Activated CD4-positive, alpha-beta memory T cell treated with anti-CD3 and anti-CD28 coated beads, Interleukin-2, amount 10 ng/mL, durations not matched to agents 7 days and 5 days (primary cell): ENCODE measurements at regions of chr2 and their contacts with region 1.

Region 1: GRCh38 chr2:178761759-178762371 is 45.4 kb downstream of the TTN start:
- DNase-seq: peak; percentile 21
- H3K4me3 Mint-ChIP-seq: no peak overlapping the region
- H3K27ac Mint-ChIP-seq: no peak overlapping the region
- H3K4me1 Mint-ChIP-seq: no peaks in the 10 kb centered on the region
- H3K27me3 Mint-ChIP-seq: no peaks in the 10 kb centered on the region

Region 2: DNA sequence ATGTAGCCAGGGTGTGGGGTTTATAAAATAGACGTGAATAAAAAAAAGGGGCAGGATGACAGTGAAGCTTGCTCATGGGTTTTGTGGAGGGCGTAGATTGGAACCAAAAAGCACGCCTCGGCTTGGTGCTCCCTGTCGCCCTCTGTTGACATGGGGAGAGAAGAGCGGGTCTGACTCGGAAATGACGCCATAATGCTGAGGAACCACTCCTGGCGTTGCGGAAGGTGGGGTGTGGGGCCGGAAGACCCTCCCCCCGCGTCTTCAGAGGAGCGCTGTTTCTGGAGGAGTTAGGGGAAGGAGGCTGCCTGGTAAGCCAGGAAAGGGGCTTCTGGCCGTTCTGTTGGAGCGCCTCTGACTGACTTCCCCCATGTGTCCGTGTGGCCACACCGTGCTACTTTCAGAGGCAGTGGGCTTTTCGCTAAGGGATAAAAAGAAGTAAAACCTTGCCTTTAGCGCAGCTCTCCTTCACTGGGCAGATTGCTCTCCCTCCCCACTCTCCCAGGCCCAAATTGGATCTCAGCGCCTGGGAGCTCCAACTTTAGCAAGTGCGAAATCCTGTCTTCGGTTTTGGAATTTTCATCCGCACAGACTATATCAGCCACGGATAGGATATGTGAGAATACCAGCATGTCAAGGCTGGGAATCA is 238.8 kb before region 1 on chr2:
- CTCF ChIA-PET with region 1: no interaction called
- POLR2A ChIA-PET with region 1: no interaction called
- DNase-seq: peak; percentile 88
- H3K4me3 Mint-ChIP-seq: peak overlapping the region; percentile 89
- H3K27ac Mint-ChIP-seq: peak overlapping the region; percentile 80
- H3K4me1 Mint-ChIP-seq: peaks cover 57% of the 10 kb centered on the region
- H3K27me3 Mint-ChIP-seq: no peaks in the 10 kb centered on the region

Region 3: GRCh38 chr2:178718283-178718682 is 43.6 kb before region 1 on chr2:
- CTCF ChIA-PET with region 1: no interaction called
- POLR2A ChIA-PET with region 1: no interaction called
- DNase-seq: no peak
- H3K4me3 Mint-ChIP-seq: no peak overlapping the region
- H3K27ac Mint-ChIP-seq: no peak overlapping the region
- H3K4me1 Mint-ChIP-seq: no peaks in the 10 kb centered on the region
- H3K27me3 Mint-ChIP-seq: no peaks in the 10 kb centered on the region

Region 4: DNA sequence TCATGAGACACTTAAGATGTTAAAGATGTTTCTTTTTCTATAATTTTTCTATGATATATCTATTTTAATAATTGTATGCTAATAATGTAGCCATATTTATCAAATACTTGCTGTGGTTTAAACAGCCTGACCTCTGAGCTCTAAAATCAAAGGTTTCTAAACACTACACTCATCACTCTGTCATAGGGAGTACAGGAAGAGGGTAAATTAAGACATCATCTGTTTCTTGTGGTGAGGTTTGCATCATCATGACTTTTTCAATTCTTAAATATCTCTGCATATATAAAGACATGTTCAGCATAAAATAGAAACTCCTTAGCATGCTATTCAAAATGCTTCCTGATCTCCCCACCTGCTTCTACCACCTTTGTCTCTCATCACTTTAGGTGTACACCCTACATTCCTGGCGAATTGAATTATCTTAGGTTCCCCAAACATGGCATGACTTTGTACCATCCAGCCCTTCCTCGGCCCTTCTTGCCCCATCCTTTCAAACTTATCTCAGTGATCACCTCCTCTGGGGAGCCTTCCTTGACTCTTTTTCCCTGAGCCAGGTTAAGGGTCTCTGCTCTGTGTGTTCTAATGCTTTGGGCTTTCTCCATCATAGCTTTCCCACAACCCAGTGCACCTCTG is 150.7 kb after region 1 on chr2:
- CTCF ChIA-PET with region 1: interaction called, 15 read pairs
- POLR2A ChIA-PET with region 1: no interaction called
- DNase-seq: no peak
- H3K4me3 Mint-ChIP-seq: no peak overlapping the region
- H3K27ac Mint-ChIP-seq: no peak overlapping the region
- H3K4me1 Mint-ChIP-seq: peaks cover 9% of the 10 kb centered on the region
- H3K27me3 Mint-ChIP-seq: peaks cover 5% of the 10 kb centered on the region